ENCODE measurements at regions of chr2 and their contacts with region 1.

Region 1: DNA sequence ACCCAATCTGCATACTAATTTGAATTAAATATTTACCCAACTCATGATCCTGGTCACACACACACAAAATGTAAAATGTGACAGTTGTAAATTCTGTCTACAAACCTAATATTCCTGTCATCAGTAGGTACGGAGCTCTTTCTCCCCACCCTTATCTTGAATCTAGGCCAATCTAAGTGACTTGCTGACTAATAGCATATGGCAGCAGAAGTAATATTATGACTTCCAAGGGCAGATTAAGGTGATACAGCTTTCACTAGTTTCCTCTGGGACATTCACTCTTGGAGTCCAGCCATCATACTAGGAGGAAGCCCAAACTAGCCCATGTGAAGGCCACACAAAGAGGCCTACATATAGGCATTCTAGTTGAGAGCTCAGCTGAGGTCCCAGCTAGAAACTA is 89.4 kb downstream of the TMEM131 start:
- DNase-seq: no peak
- ATAC-seq: no peak
- H3K4me3 Mint-ChIP-seq: peak overlapping the region; percentile 4
- H3K27ac Mint-ChIP-seq: peak overlapping the region; percentile 92
- H3K4me1 Mint-ChIP-seq: peaks cover 58% of the 10 kb centered on the region
- H3K27me3 Mint-ChIP-seq: no peaks in the 10 kb centered on the region
- CTCF ChIP-seq: no peak

Region 2: GRCh38 chr2:96760036-96760985 is 1146.0 kb before region 1 on chr2 and contains the start of gene CNNM4:
- CTCF ChIA-PET with region 1: no interaction called
- POLR2A ChIA-PET with region 1: no interaction called
- intact Hi-C with region 1: no loop called
- DNase-seq: peak; percentile 89
- ATAC-seq: peak; percentile 91
- H3K4me3 Mint-ChIP-seq: peak within 1 kb of the TSS; percentile 90
- H3K27ac Mint-ChIP-seq: peak within 1 kb of the TSS; percentile 89
- H3K4me1 Mint-ChIP-seq: peaks cover 49% of the 10 kb centered on the region
- H3K27me3 Mint-ChIP-seq: no peaks in the 10 kb centered on the region
- CTCF ChIP-seq: no peak
- total RNA-seq, gene CNNM4: 7.4 and 10.0 TPM in 2 replicates

Region 3: DNA sequence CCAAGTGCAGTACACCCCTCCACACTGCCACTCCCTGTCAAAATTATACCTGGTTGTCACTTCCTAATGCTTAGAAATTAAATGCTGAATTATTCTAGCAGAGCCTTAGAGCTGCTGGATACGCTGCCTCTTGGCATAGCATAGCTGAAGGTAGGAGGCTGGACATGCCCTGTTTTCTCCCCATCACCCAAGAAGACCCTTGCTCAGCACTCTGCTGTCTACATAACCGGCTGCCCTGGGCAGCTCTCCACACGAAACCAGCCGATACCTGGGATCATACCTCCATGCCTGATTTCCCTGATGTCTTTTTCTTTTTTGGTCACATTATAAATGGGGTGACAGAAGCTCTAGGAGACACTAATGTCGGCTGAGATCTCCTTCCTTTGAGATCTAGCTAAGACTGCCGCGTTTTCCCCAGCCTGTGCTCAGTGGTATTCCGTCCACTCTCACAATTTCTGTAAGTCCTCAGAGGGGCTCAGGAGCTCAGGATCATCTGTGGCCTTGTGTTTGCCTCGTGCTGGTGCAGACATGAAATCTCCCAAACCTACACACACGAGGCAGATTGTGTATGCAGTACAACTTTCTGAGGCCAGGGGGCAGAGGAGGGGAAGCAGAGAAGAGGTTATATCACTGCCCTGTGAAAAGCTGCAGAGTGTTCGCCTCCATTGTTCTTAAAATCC is 206.4 kb before region 1 on chr2:
- CTCF ChIA-PET with region 1: no interaction called
- POLR2A ChIA-PET with region 1: no interaction called
- intact Hi-C with region 1: no loop called
- DNase-seq: no peak
- ATAC-seq: peak; percentile 86
- H3K4me3 Mint-ChIP-seq: no peak overlapping the region
- H3K27ac Mint-ChIP-seq: no peak overlapping the region
- H3K4me1 Mint-ChIP-seq: peaks cover 6% of the 10 kb centered on the region
- H3K27me3 Mint-ChIP-seq: peaks cover 2% of the 10 kb centered on the region
- CTCF ChIP-seq: no peak

Region 4: GRCh38 chr2:97870396-97870843 is 35.9 kb before region 1 on chr2:
- CTCF ChIA-PET with region 1: no interaction called
- POLR2A ChIA-PET with region 1: no interaction called
- intact Hi-C with region 1: loop called (anchors 5 kb)
- DNase-seq: no peak
- ATAC-seq: peak; percentile 93
- H3K4me3 Mint-ChIP-seq: no peak overlapping the region
- H3K27ac Mint-ChIP-seq: peak overlapping the region; percentile 30
- H3K4me1 Mint-ChIP-seq: peaks cover 54% of the 10 kb centered on the region
- H3K27me3 Mint-ChIP-seq: no peaks in the 10 kb centered on the region
- CTCF ChIP-seq: no peak

Region 5: GRCh38 chr2:97890093-97890492 is 16.2 kb before region 1 on chr2:
- CTCF ChIA-PET with region 1: no interaction called
- POLR2A ChIA-PET with region 1: no interaction called
- intact Hi-C with region 1: loop called (anchors 2 kb)
- DNase-seq: no peak
- ATAC-seq: no peak
- H3K4me3 Mint-ChIP-seq: no peak overlapping the region
- H3K27ac Mint-ChIP-seq: peak overlapping the region; percentile 22
- H3K4me1 Mint-ChIP-seq: peaks cover 4% of the 10 kb centered on the region
- H3K27me3 Mint-ChIP-seq: no peaks in the 10 kb centered on the region
- CTCF ChIP-seq: no peak

Region 6: DNA sequence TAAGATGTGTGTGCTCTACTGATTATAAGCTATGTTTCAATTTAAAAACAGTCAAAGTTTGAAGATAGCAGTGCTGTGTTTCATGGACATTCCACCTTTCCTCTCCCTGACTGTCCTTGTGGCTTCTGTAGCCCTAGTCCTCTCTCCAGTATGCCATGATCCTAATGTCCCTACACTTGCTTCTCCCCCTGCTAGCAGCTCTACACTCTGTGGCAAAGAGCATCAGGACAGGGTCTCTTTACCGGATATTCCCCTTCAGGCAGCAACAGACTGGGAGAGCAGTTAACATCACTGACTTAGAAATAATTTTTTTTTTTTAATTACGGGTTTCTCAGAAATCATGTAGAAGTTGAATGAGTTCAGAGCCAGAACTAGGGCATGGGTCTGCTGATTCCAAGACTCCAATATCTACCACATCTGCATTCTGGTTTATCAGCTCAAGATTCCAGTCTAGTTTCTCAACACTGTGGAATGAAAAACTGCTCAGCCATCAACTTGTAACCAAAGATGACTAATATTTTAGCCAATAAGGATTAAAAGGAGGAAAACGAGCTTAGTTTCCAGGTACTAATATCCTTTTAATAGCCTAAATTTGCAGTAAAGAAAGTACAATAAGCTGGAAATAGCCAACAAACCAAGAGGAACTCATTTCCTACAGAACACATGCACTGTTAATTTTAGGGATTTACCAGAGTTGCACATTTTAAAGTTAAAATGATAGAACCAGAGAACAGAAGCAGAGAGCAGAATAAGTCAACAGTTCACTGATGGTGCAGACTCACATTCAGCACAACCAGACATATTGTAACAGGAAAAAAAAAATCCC is 44.2 kb after region 1 on chr2:
- CTCF ChIA-PET with region 1: no interaction called
- POLR2A ChIA-PET with region 1: interaction called, 6 read pairs
- intact Hi-C with region 1: loop called (anchors 2 kb)
- DNase-seq: no peak
- ATAC-seq: no peak
- H3K4me3 Mint-ChIP-seq: no peak overlapping the region
- H3K27ac Mint-ChIP-seq: peak overlapping the region; percentile 73
- H3K4me1 Mint-ChIP-seq: peaks cover 90% of the 10 kb centered on the region
- H3K27me3 Mint-ChIP-seq: no peaks in the 10 kb centered on the region
- CTCF ChIP-seq: no peak

Measured in activated B cell treated with CpG ODN at 0.5 μM for 24 hours (primary cell).